ENCODE measurements at regions of chr22 and their contacts with region 1.

Region 1: DNA sequence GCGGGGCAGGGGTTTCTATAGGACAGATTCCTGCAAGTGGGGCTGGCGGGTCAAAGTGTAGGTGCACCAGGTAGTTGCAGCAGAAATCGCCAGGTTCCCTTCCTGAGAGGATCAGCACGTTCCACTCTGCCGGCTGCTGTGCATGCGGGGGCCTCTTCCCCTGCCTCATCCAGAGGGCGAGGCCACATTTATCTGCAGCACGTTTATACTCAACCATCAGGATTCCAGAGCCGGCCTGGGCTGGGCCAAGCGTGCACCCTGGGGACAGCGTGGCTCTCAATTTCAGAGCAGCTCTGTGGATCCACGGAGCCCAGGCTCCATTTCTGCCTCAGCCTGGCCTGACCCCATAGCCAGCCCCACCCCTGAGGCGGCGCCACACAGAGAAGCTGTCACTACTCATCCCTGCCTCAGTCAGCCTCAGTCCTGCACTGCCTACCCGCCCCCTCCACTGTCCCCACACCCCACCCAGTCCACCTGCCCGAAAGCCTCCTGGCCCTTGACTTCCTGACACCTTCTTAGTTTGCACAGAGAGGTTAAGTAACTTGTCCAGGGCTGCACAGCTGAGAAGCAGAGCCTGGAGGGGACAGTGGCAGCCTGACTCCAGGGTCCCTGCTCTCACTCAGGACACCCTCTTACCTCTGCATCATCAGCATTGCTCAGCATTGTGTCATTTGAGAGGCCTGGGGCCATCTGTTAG is 45.9 kb upstream of the RTL6 start:
- DNase-seq: no peak
- H3K4me3 ChIP-seq: no peak overlapping the region
- H3K27ac ChIP-seq: no peak overlapping the region
- H3K4me1 ChIP-seq: no peaks in the 10 kb centered on the region
- H3K27me3 ChIP-seq: no peaks in the 10 kb centered on the region
- CTCF ChIP-seq: no peak
- POLR2A ChIP-seq: no peak

Region 2: GRCh38 chr22:43110444-43110926 is 1433.4 kb before region 1 on chr22 and contains the start of gene BIK:
- intact Hi-C with region 1: loop called (anchors 5 kb)
- DNase-seq: peak in 1 of 2 donors; percentile 27
- H3K4me3 ChIP-seq: peak within 1 kb of the TSS; percentile 3 to 28
- H3K27ac ChIP-seq: no peak within 1 kb of the TSS
- H3K4me1 ChIP-seq: peaks cover 0 to 12% of the 10 kb centered on the region in 2 donors
- H3K27me3 ChIP-seq: peaks cover 8 to 14% of the 10 kb centered on the region in 2 donors
- CTCF ChIP-seq: peak in 1 of 4 experiments; percentile 8
- POLR2A ChIP-seq: no peak
- total RNA-seq, gene BIK: 0.49 to 0.77 (median 0.76) TPM in 3 of 4 donors, not detected in the other

Region 3: GRCh38 chr22:44616882-44617655 is 73.1 kb after region 1 on chr22:
- intact Hi-C with region 1: no loop called
- DNase-seq: no peak
- H3K4me3 ChIP-seq: no peak overlapping the region
- H3K27ac ChIP-seq: no peak overlapping the region
- H3K4me1 ChIP-seq: peaks cover 0 to 6% of the 10 kb centered on the region in 2 donors
- H3K27me3 ChIP-seq: peaks cover 3 to 5% of the 10 kb centered on the region in 2 donors
- CTCF ChIP-seq: no peak
- POLR2A ChIP-seq: no peak